Activated B cell treated with CpG ODN at 0.5 μM for 24 hours (primary cell): ENCODE measurements at regions of chr16 and their contacts with region 1.

Region 1: DNA sequence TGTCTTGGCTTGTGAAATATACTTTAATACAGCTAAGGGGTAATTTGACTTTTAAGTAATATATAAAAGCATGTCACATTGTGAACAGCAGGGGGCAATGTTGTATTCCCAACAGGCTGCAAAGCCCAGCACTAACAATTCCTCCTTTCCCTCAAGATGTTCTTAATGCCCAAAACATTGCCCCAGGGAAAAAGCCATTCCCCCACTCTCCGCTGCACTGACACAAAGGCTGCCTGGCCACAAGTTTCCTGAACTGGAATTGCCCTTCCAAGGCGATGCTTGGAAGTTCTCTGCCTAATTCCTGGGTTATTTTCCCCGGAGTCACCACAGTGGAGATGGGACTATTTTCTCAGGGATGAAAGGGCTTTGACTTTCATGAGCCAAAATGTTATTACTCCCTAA is 27.2 kb downstream of the CLEC16A start:
- DNase-seq: no peak
- ATAC-seq: peak; percentile 54
- H3K4me3 Mint-ChIP-seq: no peak overlapping the region
- H3K27ac Mint-ChIP-seq: no peak overlapping the region
- H3K4me1 Mint-ChIP-seq: peaks cover 12% of the 10 kb centered on the region
- H3K27me3 Mint-ChIP-seq: no peaks in the 10 kb centered on the region
- CTCF ChIP-seq: peak; percentile 74

Region 2: DNA sequence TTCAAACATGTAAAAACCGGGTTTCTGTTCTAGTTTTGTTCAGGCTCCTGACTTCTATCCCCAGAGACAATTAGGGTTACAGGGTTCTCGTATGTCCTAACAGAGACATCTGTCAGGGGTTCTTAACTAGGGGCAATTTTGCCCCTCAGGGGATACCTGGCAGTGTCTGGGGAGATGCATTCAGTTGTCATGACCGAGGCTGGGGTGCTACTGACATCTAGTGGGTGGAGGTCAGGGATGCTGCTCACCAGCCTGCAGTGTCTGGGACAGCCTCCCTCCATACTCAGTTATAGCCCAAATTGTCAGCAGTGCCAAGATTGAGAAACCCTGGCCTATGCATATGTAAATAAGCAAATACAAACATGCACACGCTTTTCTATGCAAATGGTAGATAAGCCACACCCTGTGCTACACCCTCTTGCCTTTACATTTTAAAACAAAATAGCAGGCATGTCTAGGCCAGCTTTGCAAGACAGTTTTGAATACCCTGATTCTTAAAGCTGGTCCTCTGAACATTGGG is 10.2 kb after region 1 on chr16:
- CTCF ChIA-PET with region 1: interaction called, 10 read pairs
- POLR2A ChIA-PET with region 1: interaction called, 5 read pairs
- intact Hi-C with region 1: loop called (anchors 1 kb)
- DNase-seq: peak; percentile 64
- ATAC-seq: peak; percentile 88
- H3K4me3 Mint-ChIP-seq: peak overlapping the region; percentile 69
- H3K27ac Mint-ChIP-seq: peak overlapping the region; percentile 84
- H3K4me1 Mint-ChIP-seq: peaks cover 49% of the 10 kb centered on the region
- H3K27me3 Mint-ChIP-seq: no peaks in the 10 kb centered on the region
- CTCF ChIP-seq: no peak